ENCODE measurements at regions of chr11 and their contacts with region 1.

Region 1: GRCh38 chr11:10623797-10624761 is 55.6 kb upstream of the LYVE1 start:
- DNase-seq: no peak
- H3K4me3 ChIP-seq: no peak overlapping the region
- H3K27ac ChIP-seq: no peak overlapping the region
- H3K4me1 ChIP-seq: peaks cover 0 to 35% (median 31%) of the 10 kb centered on the region in 4 experiments
- H3K27me3 ChIP-seq: no peaks in the 10 kb centered on the region

Region 2: DNA sequence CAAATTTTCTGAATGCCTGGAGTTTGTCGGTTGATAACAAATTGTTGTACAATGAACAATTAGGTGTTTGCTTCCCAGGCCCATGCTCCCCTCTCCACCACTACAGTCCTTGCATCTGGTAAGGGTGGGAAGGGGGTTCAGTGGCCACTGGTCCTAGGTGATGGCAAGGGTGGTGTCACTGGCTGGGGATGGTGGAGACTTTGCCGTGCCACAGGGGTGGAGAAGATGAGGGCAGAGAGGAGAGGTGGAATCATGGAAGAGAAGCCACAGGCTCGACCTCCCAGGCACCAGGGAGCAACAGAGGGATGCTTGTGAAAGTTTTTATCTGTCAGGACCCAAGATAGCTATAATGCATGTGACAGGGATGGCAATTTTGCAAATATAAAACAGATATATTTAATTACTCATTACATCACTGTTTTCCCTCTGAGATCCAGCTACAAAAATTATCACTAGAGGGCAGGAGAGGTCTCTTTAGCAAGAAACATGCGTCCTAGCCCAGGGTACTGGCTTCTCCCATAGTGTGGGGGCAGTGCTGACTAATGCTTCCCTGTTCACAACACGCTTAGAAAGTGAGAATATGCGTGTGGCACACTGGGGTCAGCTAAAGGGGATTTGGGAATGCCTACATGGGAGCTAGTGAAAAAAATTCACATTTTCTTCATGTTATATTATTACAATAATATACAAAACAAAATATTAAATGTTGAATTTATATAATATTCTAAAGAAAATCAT is 218.1 kb before region 1 on chr11:
- CTCF ChIA-PET with region 1: interaction called, 12 read pairs
- POLR2A ChIA-PET with region 1: no interaction called
- DNase-seq: peak; percentile 86 to 88 (median 87)
- H3K4me3 ChIP-seq: no peak overlapping the region
- H3K27ac ChIP-seq: no peak overlapping the region
- H3K4me1 ChIP-seq: peaks cover 4 to 62% (median 46%) of the 10 kb centered on the region in 4 experiments
- H3K27me3 ChIP-seq: no peaks in the 10 kb centered on the region

Region 3: DNA sequence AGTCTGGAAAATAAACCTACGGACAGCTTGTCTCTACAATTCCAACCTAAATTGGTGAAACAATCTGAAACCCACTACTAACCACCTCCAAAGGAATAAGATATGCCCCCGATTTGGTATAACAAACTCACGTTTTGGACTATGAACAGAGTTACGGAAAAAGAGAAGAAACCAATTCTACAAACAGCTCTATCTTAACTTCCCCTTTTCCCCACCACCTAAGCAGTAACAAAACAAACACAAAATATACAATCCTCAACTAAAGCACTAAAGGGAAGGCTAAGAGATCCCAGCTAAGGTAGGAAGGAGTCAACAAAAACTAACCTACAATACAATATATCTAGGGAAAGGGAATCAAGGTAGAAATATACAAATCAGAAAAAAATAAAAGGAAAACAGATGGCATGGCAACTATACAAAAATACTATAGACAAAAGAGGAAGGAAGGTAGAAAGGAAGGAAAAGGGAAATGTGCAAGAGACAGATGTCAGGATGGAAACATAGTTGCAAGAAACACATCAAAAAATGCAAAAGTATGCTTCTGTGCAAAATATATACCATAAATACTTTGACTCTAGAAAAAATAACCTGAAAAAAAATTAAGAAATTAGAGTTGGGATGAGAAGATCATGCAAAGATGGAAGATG is 11.7 kb before region 1 on chr11:
- CTCF ChIA-PET with region 1: interaction called, 22 read pairs
- POLR2A ChIA-PET with region 1: no interaction called
- DNase-seq: peak; percentile 44 to 85 (median 76)
- H3K4me3 ChIP-seq: no peak overlapping the region
- H3K27ac ChIP-seq: peak overlapping the region; percentile 46 to 65
- H3K4me1 ChIP-seq: peaks cover 23 to 48% (median 33%) of the 10 kb centered on the region in 4 experiments
- H3K27me3 ChIP-seq: no peaks in the 10 kb centered on the region

Region 4: GRCh38 chr11:10641177-10641911 is 17.3 kb after region 1 on chr11:
- CTCF ChIA-PET with region 1: interaction called, 17 read pairs
- POLR2A ChIA-PET with region 1: no interaction called
- DNase-seq: peak; percentile 34 to 91 (median 85)
- H3K4me3 ChIP-seq: peak overlapping the region in 1 of 7 experiments; percentile 41
- H3K27ac ChIP-seq: peak overlapping the region in 1 of 2 experiments; percentile 46
- H3K4me1 ChIP-seq: peaks cover 28 to 45% (median 36%) of the 10 kb centered on the region in 4 experiments
- H3K27me3 ChIP-seq: no peaks in the 10 kb centered on the region

Measured in common myeloid progenitor, CD34-positive (primary cell).